Right cardiac atrium (tissue), 5 donors: ENCODE measurements at regions of chr4 and their contacts with region 1.

Region 1: GRCh38 chr4:74133786-74134499 is 24.0 kb upstream of the MTHFD2L start:
- DNase-seq: peak; percentile 77 to 86 (median 81)
- ATAC-seq: peak; percentile 87 to 95
- H3K4me3 ChIP-seq: no peak overlapping the region
- H3K27ac ChIP-seq: no peak overlapping the region
- H3K4me1 ChIP-seq: no peaks in the 10 kb centered on the region
- H3K27me3 ChIP-seq: no peaks in the 10 kb centered on the region

Region 2: GRCh38 chr4:73446336-73446938 is 687.5 kb before region 1 on chr4:
- intact Hi-C with region 1: no loop called
- DNase-seq: no peak
- ATAC-seq: no peak
- H3K4me3 ChIP-seq: no peak overlapping the region
- H3K27ac ChIP-seq: no peak overlapping the region
- H3K4me1 ChIP-seq: peaks cover 3% of the 10 kb centered on the region
- H3K27me3 ChIP-seq: no peaks in the 10 kb centered on the region

Region 3: DNA sequence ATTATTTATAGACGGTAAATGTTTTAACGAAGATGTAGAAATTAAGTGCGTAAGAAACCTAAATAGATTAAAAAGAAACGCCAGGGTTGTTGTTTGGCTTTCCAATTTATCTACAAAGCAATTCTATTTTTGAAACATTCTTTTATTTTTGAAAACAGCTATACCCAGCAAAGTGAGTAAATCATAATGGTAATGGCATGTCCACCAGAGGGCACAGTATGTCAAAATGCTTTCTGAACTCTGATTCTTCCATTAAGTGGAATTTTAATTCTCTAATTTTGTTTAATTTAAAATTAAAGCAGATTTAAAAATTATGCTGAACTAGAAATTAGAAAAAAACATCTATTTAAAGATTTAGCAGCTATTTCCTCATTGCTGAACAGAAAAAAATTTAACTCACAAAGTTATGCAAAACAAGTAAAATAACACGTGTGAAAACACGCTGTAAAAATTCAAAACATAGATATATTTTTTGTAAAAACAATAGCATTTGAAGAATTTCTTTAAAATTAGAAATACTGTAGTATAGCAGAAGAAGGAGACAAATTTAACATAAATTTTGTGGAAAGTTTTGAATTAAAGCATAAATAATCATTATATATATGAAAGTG is 540.2 kb before region 1 on chr4:
- intact Hi-C with region 1: loop called in 2 of 4 experiments (anchors 10 kb)
- DNase-seq: no peak
- ATAC-seq: no peak
- H3K4me3 ChIP-seq: no peak overlapping the region
- H3K27ac ChIP-seq: no peak overlapping the region
- H3K4me1 ChIP-seq: no peaks in the 10 kb centered on the region
- H3K27me3 ChIP-seq: no peaks in the 10 kb centered on the region

Region 4: DNA sequence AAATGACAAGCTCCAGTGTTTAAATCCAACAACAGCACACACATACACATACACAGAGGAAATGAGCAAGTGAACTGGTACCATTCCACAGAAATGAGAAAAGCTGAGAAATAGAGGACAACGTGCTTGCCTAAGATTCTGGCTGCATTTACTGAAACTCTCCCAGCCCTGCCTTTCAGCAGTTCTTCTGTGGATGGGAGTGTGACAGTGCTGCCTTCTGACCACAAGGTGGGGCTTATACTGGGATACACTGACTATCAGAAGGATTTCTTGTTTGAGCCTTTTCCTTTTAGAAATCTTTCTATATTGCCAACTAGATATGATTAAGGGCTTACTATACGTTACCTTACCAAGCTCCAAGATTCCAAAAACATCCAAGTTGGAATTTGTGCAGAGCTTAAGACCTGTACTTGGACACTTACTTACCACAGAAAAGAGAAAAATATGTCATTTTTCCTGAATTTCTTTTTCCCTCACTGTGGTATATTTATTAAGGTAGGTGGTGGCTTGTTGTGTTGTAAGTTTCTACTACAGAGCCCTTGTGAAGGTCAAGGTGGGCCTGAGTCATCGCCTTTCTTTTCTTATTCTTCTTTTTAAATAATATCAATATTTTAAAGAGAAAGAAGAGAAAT is 404.3 kb before region 1 on chr4:
- intact Hi-C with region 1: loop called in 3 of 4 experiments (anchors 5 to 10 kb)
- DNase-seq: peak; percentile 67 to 81 (median 72)
- ATAC-seq: peak; percentile 90 to 94
- H3K4me3 ChIP-seq: no peak overlapping the region
- H3K27ac ChIP-seq: peak overlapping the region; percentile 74
- H3K4me1 ChIP-seq: no peaks in the 10 kb centered on the region
- H3K27me3 ChIP-seq: no peaks in the 10 kb centered on the region

Region 5: GRCh38 chr4:73922766-73923630 is 210.9 kb before region 1 on chr4:
- intact Hi-C with region 1: loop called in 1 of 4 experiments (anchors 5 kb)
- DNase-seq: no peak
- ATAC-seq: no peak
- H3K4me3 ChIP-seq: no peak overlapping the region
- H3K27ac ChIP-seq: no peak overlapping the region
- H3K4me1 ChIP-seq: no peaks in the 10 kb centered on the region
- H3K27me3 ChIP-seq: no peaks in the 10 kb centered on the region